HCT116 (cell line): ENCODE measurements at regions of chr10 and their contacts with region 1.

Region 1: DNA sequence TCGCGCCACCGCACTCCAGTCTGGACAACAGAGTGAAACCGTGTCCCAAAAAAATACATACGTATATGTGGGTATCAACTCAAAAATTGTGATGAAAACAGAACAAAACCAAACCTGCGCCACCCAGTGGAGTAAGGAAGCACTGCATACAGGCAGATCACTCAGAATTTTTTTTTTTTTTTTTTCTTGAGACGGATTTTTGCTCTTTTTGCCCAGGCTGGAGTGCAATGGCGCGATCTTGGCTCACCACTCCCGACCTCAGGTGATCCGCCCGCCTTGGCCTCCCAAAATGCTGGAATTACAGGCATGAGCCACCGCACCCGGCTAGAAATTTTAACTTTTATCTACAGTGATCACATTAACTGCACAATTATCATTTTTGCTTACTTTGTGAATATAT is 9.1 kb upstream of the TMEM236 start:
- DNase-seq: peak; percentile 49
- ATAC-seq: peak; percentile 74
- H3K4me3 ChIP-seq: peak overlapping the region; percentile 9 to 28; a peak in 2 of 4 replicates
- H3K27ac ChIP-seq: no peak overlapping the region
- H3K4me1 ChIP-seq: peaks cover 0 to 10% of the 10 kb centered on the region in 2 experiments; a peak in 2 of 4 replicates
- H3K27me3 ChIP-seq: no peaks in the 10 kb centered on the region
- CTCF ChIP-seq: peak; percentile 59 to 78 (median 71); a peak in 5 of 6 replicates
- POLR2A ChIP-seq: no peak
- RAD21 ChIP-seq: peak; percentile 63

Region 2: GRCh38 chr10:16843252-16843870 is 899.6 kb before region 1 on chr10:
- CTCF ChIA-PET with region 1: no interaction called
- POLR2A ChIA-PET with region 1: no interaction called
- RAD21 ChIA-PET with region 1: no interaction called
- intact Hi-C with region 1: loop called (anchors 10 kb)
- DNase-seq: peak; percentile 58
- ATAC-seq: peak; percentile 68
- H3K4me3 ChIP-seq: no peak overlapping the region
- H3K27ac ChIP-seq: no peak overlapping the region
- H3K4me1 ChIP-seq: no peaks in the 10 kb centered on the region
- H3K27me3 ChIP-seq: no peaks in the 10 kb centered on the region
- CTCF ChIP-seq: peak; percentile 23 to 74 (median 72); a peak in 4 of 6 replicates
- POLR2A ChIP-seq: no peak
- RAD21 ChIP-seq: peak; percentile 82